ENCODE measurements at regions of chr10 and their contacts with region 1.

Region 1: GRCh38 chr10:86585037-86585725 is 63.6 kb upstream of the WAPL start:
- DNase-seq: peak; percentile 39 to 73 (median 59)
- H3K4me3 ChIP-seq: no peak overlapping the region
- H3K27ac ChIP-seq: no peak overlapping the region
- H3K4me1 ChIP-seq: no peaks in the 10 kb centered on the region
- H3K27me3 ChIP-seq: no peaks in the 10 kb centered on the region
- CTCF ChIP-seq: peak; percentile 62 to 72 (median 66)
- EP300 ChIP-seq: no peak
- POLR2A ChIP-seq: no peak

Region 2: DNA sequence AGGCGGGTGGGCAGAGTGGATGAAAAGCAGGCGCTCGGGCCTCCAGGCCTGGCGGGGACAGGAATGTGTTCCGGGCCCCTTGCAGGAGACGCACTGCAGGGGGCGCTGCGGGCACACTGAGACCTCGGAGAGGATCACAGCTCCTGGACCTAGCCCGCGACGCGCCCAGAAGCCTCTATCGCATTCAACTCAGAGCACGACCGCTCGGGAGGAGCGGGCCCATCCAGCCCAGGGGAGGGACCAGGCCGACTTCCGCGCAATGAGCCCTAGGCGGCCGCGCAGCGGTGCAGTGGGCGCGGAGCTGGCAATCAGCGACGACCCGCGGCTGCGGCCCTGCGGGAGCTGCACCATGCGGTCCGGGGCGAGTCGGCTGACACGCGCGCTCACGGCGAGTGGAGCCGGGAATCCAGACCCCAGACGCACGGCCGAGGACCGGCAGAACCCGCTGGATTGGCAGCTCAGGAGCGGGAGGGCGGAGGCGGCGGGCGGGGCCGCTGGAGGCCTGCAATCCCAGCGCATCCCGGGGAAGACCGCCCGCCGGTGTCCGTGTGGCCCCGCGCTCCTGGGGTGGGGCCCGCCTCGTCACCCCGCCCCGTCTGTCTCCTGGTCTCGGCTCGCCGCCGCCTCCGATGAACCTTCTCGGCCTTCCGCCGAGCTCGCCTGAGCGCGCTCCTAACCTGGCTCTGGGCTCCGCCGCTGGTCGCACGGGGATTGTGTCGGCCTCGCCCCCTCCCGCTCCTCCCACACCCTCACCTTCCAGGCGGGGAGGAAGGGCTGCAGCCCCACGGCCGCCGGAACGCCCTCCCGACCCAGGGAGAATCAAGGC is 185.1 kb before region 1 on chr10:
- intact Hi-C with region 1: loop called (anchors 1 to 10 kb)
- DNase-seq: peak; percentile 84 to 93 (median 88)
- H3K4me3 ChIP-seq: peak overlapping the region; percentile 63
- H3K27ac ChIP-seq: peak overlapping the region; percentile 35 to 53
- H3K4me1 ChIP-seq: peaks cover 10% of the 10 kb centered on the region
- H3K27me3 ChIP-seq: no peaks in the 10 kb centered on the region
- CTCF ChIP-seq: peak; percentile 64 to 75 (median 68)
- EP300 ChIP-seq: no peak
- POLR2A ChIP-seq: no peak